ENCODE measurements at regions of chr9 and their contacts with region 1.

Region 1: DNA sequence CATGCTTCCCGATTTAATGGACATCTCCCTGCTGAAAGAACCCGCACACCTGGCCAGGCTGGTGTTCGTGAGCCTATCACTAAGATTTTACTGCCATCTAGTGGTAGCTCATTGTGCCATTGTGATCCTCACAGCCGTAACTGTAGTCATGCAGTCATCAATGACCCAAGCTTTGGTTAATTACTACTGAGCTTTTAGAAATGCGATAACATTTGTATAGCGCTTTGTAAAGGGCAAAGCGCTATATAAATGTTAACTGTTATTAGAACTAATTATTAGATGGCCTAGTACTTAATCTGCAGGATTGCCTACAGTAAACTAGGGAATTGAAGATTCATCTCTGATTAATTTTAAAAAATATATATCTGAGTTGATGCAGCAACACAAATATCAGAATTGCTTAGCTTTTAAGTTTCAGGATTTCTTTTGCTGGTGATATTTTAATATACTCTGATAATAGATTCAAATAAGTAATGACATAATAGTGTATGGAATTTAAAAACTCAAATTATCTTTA is 90.2 kb downstream of the HACD4 start:
- DNase-seq: peak; percentile 23 to 64 (median 35)
- ATAC-seq: peak; percentile 86 to 88
- H3K4me3 ChIP-seq: no peak overlapping the region
- H3K27ac ChIP-seq: no peak overlapping the region
- H3K4me1 ChIP-seq: no peaks in the 10 kb centered on the region
- H3K27me3 ChIP-seq: no peaks in the 10 kb centered on the region

Region 2: DNA sequence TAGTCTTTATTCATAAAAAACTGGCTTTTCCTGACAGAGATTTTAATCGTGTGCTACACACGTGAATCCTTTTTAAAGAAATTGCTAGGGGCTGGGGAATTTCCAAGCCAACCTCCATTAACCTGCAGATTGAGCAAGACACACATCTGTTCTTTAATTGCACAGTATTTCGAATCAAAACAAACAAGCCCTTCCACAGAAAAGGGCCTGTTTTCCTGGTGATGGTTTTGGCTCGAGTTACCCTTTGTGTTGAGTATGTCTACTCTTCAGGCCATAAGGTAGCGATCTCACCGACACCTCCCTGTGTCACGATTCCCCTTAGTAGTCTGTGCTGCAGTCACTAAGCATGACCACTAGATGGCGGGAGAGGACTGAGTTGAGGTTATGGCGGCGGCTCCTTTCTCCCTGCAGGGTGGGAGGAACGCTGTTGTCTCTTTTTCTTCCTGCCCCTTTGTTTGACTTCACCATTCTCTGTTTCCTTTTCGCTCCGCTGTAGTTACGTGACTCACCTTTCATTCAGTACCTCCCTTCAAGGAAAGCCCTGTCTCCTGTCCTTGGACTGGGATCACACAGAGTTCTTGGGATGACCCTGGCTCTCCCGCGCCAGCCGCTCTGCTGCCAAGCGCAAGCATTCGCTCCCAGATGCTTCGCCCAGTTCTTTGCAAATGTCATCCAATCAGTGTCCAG is 1015.3 kb before region 1 on chr9:
- intact Hi-C with region 1: loop called in 3 of 4 experiments (anchors 5 to 10 kb)
- DNase-seq: peak; percentile 37 to 75 (median 70)
- ATAC-seq: peak; percentile 94 to 95
- H3K4me3 ChIP-seq: peak overlapping the region; percentile 50
- H3K27ac ChIP-seq: no peak overlapping the region
- H3K4me1 ChIP-seq: no peaks in the 10 kb centered on the region
- H3K27me3 ChIP-seq: no peaks in the 10 kb centered on the region

Region 3: DNA sequence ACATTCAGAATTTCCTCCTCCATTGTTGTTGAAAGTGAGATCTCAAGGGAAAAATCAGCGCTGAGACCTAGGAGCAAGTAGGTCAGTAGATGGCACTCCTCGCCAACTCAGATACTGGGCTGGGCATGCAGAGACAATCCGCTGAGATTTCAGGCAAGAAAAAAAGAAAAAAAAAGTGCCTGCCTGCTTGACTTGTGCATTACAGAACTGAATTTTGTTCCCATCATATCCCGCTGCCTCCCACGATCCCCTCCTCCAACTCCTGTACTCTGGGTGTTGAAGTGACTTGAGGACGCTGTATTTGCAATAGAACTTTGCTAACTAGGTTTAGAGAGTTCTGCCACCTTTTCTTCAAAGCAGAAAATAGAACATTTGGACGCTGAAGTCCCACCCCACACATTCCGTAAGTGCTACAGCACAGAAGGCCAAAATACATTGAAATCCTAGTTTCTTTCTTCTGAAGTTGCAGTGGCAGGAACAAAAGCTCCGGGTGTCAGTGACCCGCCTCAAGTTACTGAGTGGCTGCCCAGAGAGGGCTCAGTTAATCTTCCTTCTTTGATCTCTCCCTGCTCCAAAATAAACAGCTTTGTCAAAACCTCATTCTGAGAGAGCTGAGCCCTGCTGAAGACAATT is 584.7 kb before region 1 on chr9:
- intact Hi-C with region 1: loop called in 2 of 4 experiments (anchors 5 kb)
- DNase-seq: peak; percentile 56 to 71 (median 67)
- ATAC-seq: peak; percentile 91 to 94
- H3K4me3 ChIP-seq: peak overlapping the region; percentile 40
- H3K27ac ChIP-seq: peak overlapping the region; percentile 1
- H3K4me1 ChIP-seq: no peaks in the 10 kb centered on the region
- H3K27me3 ChIP-seq: no peaks in the 10 kb centered on the region

Region 4: GRCh38 chr9:20854444-20854843 is 86.8 kb before region 1 on chr9:
- intact Hi-C with region 1: no loop called
- DNase-seq: no peak
- ATAC-seq: no peak
- H3K4me3 ChIP-seq: no peak overlapping the region
- H3K27ac ChIP-seq: no peak overlapping the region
- H3K4me1 ChIP-seq: no peaks in the 10 kb centered on the region
- H3K27me3 ChIP-seq: no peaks in the 10 kb centered on the region